ENCODE measurements at regions of chr7 and their contacts with region 1.

Region 1: GRCh38 chr7:150988230-150989226 is 2.3 kb upstream of the NOS3 start:
- DNase-seq: no peak
- ATAC-seq: peak; percentile 84
- H3K4me3 ChIP-seq: no peak overlapping the region
- H3K27ac ChIP-seq: no peak overlapping the region
- H3K4me1 ChIP-seq: no peaks in the 10 kb centered on the region; the same call in 1 of the 2 replicates
- H3K27me3 ChIP-seq: peaks cover 0 to 3% of the 10 kb centered on the region in 2 experiments; a peak in 2 of 4 replicates
- CTCF ChIP-seq: peak; percentile 65 to 79 (median 72)
- EP300 ChIP-seq: no peak
- POLR2A ChIP-seq: no peak
- RAD21 ChIP-seq: peak; percentile 73

Region 2: GRCh38 chr7:150778738-150779301 is 209.7 kb before region 1 on chr7:
- CTCF ChIA-PET with region 1: interaction called, 34 read pairs
- POLR2A ChIA-PET with region 1: no interaction called
- RAD21 ChIA-PET with region 1: interaction called, 4 read pairs
- SMC1A ChIA-PET with region 1: interaction called, 5 read pairs
- in situ Hi-C with region 1: loop called (anchors 5 kb)
- intact Hi-C with region 1: loop called (anchors 2 kb)
- DNase-seq: no peak
- ATAC-seq: peak; percentile 86
- H3K4me3 ChIP-seq: no peak overlapping the region
- H3K27ac ChIP-seq: no peak overlapping the region
- H3K4me1 ChIP-seq: 0 out of 2 replicates have a peak, but pooled peaks cover 3% of the 10 kb centered on the region
- H3K27me3 ChIP-seq: no peaks in the 10 kb centered on the region
- CTCF ChIP-seq: peak; percentile 87 to 92 (median 88)
- EP300 ChIP-seq: no peak
- POLR2A ChIP-seq: no peak
- RAD21 ChIP-seq: peak; percentile 77

Region 3: GRCh38 chr7:150903606-150904005 is 84.9 kb before region 1 on chr7:
- CTCF ChIA-PET with region 1: interaction called, 10 read pairs
- POLR2A ChIA-PET with region 1: no interaction called
- RAD21 ChIA-PET with region 1: no interaction called
- SMC1A ChIA-PET with region 1: interaction called, 6 read pairs
- in situ Hi-C with region 1: loop called (anchors 5 kb)
- intact Hi-C with region 1: loop called (anchors 1 kb)
- DNase-seq: no peak
- ATAC-seq: peak; percentile 46
- H3K4me3 ChIP-seq: no peak overlapping the region
- H3K27ac ChIP-seq: no peak overlapping the region
- H3K4me1 ChIP-seq: peaks cover under 1% of the 10 kb centered on the region
- H3K27me3 ChIP-seq: peaks cover 0 to 2% of the 10 kb centered on the region in 2 experiments; a peak in 2 of 4 replicates
- CTCF ChIP-seq: no peak
- EP300 ChIP-seq: no peak
- POLR2A ChIP-seq: no peak
- RAD21 ChIP-seq: no peak

Region 4: DNA sequence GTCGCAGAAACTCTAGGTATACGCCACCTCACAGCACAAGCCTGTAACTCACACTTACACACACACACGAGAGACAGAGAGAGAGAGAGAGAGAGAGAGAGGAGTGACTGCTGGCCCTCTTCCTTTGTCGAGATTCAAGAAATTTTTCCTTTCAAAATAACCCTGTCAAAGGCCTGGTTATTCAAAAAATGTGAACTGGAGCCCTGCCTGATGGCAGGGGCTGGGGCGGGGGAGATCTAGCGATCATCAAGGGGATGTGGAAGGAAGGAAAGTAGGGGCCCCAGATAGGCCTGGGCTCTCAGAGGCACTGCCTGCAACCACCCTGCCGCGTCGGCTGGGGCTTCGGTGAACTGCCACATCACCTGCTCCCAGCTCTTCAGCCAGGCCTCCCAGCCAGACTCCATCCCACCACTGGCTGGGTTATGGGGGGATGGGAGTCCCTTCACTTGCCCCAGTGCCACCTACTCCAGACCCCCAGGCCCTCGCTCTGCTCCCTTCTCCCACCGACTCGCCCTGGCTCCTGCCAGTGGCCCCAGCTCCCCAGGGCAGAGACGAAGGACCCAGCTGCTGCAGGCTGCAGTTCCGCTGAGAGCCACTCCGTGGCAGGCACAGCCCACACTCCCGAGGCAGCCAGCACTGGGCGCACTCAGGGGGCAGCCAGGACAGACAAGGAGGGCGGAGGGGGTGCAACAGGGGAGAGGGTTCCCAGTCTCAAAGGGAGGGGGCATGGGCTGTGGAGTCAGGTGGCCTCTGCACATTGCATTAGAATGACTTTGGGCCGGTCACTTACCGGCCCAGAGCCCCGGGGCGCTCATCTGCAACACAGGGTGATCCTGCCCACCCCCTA is 25.8 kb before region 1 on chr7:
- CTCF ChIA-PET with region 1: interaction called, 29 read pairs
- POLR2A ChIA-PET with region 1: no interaction called
- RAD21 ChIA-PET with region 1: interaction called, 4 read pairs
- SMC1A ChIA-PET with region 1: interaction called, 5 read pairs
- in situ Hi-C with region 1: no loop called
- intact Hi-C with region 1: loop called (anchors 1 kb)
- DNase-seq: no peak
- ATAC-seq: peak; percentile 97
- H3K4me3 ChIP-seq: no peak overlapping the region
- H3K27ac ChIP-seq: no peak overlapping the region
- H3K4me1 ChIP-seq: no peaks in the 10 kb centered on the region
- H3K27me3 ChIP-seq: no peaks in the 10 kb centered on the region; a peak in 2 of 4 replicates
- CTCF ChIP-seq: peak; percentile 91 to 95 (median 93)
- EP300 ChIP-seq: no peak
- POLR2A ChIP-seq: no peak
- RAD21 ChIP-seq: peak; percentile 88

Region 5: DNA sequence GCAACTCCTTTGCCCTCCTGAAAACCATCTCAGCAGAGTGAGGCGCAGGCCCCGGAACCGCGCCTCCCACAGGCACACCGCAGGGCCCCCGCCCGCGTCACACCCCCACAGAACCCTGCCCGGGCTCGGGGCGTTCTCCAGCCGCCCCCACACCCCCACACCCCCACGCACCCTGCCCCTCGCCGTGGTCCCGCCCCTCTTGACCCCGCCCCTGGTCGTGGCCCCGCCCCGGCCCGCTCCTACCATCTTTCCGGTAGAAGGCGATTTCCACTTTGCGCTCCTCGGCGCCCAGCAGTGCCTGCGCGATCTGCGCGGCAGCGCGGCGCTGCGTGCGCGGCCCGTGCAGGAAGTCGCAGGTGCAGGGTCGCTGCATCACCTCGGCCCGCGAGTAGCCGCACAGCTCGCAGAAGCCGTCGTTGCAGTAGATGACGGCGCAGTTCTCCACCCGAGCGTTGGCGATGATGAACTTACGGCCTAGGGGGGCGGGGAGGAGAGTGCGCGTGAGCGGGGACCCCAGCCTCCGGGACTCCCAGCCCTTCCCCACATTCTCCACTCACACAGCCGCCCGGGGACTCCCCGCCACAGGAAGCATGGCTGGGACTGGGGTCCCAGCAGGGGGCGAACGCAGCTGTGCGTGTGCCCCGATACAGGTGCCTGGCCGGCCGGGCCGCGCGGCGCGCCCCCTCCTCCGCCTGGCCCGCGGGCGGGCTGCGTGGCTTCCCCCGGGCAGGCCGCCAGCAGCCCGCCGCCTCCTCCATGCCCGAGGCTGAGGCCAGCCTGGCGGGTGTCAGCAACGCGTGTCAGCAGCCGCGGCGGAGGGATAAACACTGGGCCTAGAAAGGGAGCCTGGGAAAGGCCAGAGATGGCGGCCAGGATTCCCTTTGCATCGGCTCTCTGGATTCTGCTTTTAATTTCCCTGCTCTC is 13.8 kb before region 1 on chr7:
- CTCF ChIA-PET with region 1: interaction called, 11 read pairs
- POLR2A ChIA-PET with region 1: no interaction called
- RAD21 ChIA-PET with region 1: interaction called, 3 read pairs
- SMC1A ChIA-PET with region 1: interaction called, 3 read pairs
- in situ Hi-C with region 1: no loop called
- intact Hi-C with region 1: no loop called
- DNase-seq: no peak
- ATAC-seq: peak; percentile 80
- H3K4me3 ChIP-seq: peak overlapping the region; percentile 64
- H3K27ac ChIP-seq: no peak overlapping the region
- H3K4me1 ChIP-seq: peaks cover 3% of the 10 kb centered on the region
- H3K27me3 ChIP-seq: peaks cover 5 to 7% of the 10 kb centered on the region in 2 experiments
- CTCF ChIP-seq: peak in 2 of 3 experiments; percentile 36 to 52; a peak in 4 of 6 replicates
- EP300 ChIP-seq: no peak
- POLR2A ChIP-seq: peak; percentile 76
- RAD21 ChIP-seq: 0 out of 2 replicates have a peak, but pooled peaks have one; percentile 5

Region 6: GRCh38 chr7:151051108-151051507 is 62.6 kb after region 1 on chr7:
- CTCF ChIA-PET with region 1: no interaction called
- POLR2A ChIA-PET with region 1: no interaction called
- RAD21 ChIA-PET with region 1: no interaction called
- SMC1A ChIA-PET with region 1: no interaction called
- in situ Hi-C with region 1: no loop called
- intact Hi-C with region 1: no loop called
- DNase-seq: no peak
- ATAC-seq: peak; percentile 50
- H3K4me3 ChIP-seq: no peak overlapping the region
- H3K27ac ChIP-seq: no peak overlapping the region
- H3K4me1 ChIP-seq: no peaks in the 10 kb centered on the region
- H3K27me3 ChIP-seq: no peaks in the 10 kb centered on the region; a peak in 1 of 4 replicates
- CTCF ChIP-seq: no peak
- EP300 ChIP-seq: no peak
- POLR2A ChIP-seq: no peak
- RAD21 ChIP-seq: no peak